ENCODE measurements at regions of chr19 and their contacts with region 1.

Region 1: GRCh38 chr19:7943444-7944176 is at the start of gene TIMM44:
- DNase-seq: peak; percentile 99
- ATAC-seq: peak; percentile 99
- H3K4me3 Mint-ChIP-seq: peak within 1 kb of the TSS; percentile 90
- H3K27ac Mint-ChIP-seq: peak within 1 kb of the TSS; percentile 90
- H3K4me1 Mint-ChIP-seq: peaks cover 30% of the 10 kb centered on the region
- H3K27me3 Mint-ChIP-seq: no peaks in the 10 kb centered on the region
- total RNA-seq, gene TIMM44: 80.4 to 84.0 TPM

Region 2: DNA sequence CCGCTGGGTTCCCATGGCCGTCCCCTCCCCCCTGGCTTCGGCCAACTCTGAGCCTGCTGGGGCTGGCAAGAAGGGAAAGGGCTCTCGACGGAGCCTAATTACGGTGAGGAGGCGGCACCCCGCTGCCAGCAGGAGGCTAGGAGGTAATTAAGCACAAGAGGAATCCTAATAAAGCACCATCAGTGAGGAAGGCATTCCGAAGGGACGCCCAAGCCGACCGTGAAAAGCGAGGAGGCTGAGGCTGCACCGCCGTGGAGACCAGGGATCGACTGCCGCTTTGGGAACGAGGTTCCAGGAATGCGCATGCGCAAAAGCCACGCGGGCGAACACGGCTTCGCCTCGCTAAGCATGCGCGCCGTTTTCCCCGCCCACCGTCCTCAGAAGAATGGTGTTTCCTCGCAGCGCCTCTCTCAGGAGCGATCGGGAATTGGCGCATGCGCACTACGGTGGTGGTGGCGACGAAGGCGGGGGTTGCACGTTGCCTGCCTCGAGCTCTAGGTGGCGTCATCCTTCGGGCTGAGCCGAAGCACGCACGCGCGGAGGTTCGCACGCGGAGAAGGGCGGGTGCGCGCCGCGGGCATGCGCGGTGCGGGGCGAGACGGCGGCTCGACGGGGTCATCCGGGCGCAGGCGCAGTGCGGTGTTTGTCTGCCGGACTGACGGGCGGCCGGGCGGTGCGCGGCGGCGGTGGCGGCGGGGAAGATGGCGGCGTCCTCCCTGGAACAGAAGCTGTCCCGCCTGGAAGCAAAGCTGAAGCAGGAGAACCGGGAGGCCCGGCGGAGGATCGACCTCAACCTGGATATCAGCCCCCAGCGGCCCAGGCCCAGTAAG is 40.2 kb before region 1 on chr19 and contains the start of gene MAP2K7:
- CTCF ChIA-PET with region 1: interaction called, 10 read pairs
- POLR2A ChIA-PET with region 1: interaction called, 4 read pairs
- intact Hi-C with region 1: loop called (anchors 1 kb)
- DNase-seq: peak; percentile 100
- ATAC-seq: peak; percentile 91
- H3K4me3 Mint-ChIP-seq: peak within 1 kb of the TSS; percentile 85
- H3K27ac Mint-ChIP-seq: peak within 1 kb of the TSS; percentile 92
- H3K4me1 Mint-ChIP-seq: peaks cover 22% of the 10 kb centered on the region
- H3K27me3 Mint-ChIP-seq: no peaks in the 10 kb centered on the region
- total RNA-seq, gene MAP2K7: 32.2 to 33.7 TPM

Region 3: DNA sequence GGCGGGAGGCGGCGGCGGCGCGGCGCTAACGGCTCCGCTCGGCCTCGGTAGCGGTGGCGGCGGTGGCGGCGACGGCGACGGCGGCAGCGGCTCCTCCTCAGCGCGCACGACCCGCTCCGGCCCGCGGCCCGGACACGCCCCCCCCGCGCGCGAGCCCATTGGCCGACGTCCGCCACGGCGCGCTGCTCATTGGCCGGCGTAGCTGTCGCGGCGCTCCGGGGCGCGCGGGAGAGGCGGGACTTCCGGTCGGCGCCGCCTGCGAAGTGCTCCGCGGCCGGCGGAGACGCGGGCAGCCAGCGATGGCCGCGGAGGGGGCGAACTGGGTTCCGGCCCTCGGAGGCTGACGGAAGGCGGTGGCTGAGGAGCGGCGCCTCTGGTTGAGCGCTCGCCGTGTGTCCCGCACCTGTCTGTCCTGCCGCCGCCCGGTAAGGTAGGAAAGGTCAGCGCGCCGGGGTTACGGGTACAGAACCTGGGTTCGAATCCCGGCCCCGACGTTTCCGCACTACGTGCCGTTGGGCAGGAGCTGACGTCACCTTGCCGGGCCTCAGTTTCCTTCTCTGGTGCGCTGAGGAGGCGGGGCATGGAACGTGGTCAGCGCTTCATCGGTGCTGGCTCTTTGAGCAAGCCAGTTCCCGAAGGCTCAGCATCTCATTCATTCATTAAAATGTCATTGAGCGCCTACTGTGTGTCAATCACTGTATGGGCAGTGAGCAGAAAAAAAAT is 62.1 kb after region 1 on chr19 and contains the start of gene ELAVL1:
- CTCF ChIA-PET with region 1: interaction called, 9 read pairs
- POLR2A ChIA-PET with region 1: interaction called, 17 read pairs
- intact Hi-C with region 1: loop called (anchors 1 to 2 kb)
- DNase-seq: peak; percentile 95
- ATAC-seq: peak; percentile 93
- H3K4me3 Mint-ChIP-seq: peak within 1 kb of the TSS; percentile 95
- H3K27ac Mint-ChIP-seq: peak within 1 kb of the TSS; percentile 94
- H3K4me1 Mint-ChIP-seq: peaks cover 36% of the 10 kb centered on the region
- H3K27me3 Mint-ChIP-seq: no peaks in the 10 kb centered on the region
- total RNA-seq, gene ELAVL1: 149 to 184 TPM

Region 4: GRCh38 chr19:8069096-8069973 is 125.7 kb after region 1 on chr19:
- CTCF ChIA-PET with region 1: interaction called, 4 read pairs
- POLR2A ChIA-PET with region 1: no interaction called
- intact Hi-C with region 1: loop called (anchors 1 kb)
- DNase-seq: peak; percentile 48
- ATAC-seq: no peak
- H3K4me3 Mint-ChIP-seq: no peak overlapping the region
- H3K27ac Mint-ChIP-seq: no peak overlapping the region
- H3K4me1 Mint-ChIP-seq: peaks cover 2% of the 10 kb centered on the region
- H3K27me3 Mint-ChIP-seq: no peaks in the 10 kb centered on the region

Region 5: GRCh38 chr19:8252922-8253589 is 309.4 kb after region 1 on chr19:
- CTCF ChIA-PET with region 1: no interaction called
- POLR2A ChIA-PET with region 1: no interaction called
- intact Hi-C with region 1: loop called (anchors 1 to 10 kb)
- DNase-seq: peak; percentile 91
- ATAC-seq: peak; percentile 96
- H3K4me3 Mint-ChIP-seq: no peak overlapping the region
- H3K27ac Mint-ChIP-seq: no peak overlapping the region
- H3K4me1 Mint-ChIP-seq: no peaks in the 10 kb centered on the region
- H3K27me3 Mint-ChIP-seq: no peaks in the 10 kb centered on the region

Measured in activated CD4-positive, alpha-beta T cell treated with anti-CD3 and anti-CD28 coated beads for 36 hours (primary cell).